Heart left ventricle (tissue), 16 donors: ENCODE measurements at regions of chr7 and their contacts with region 1.

Region 1: GRCh38 chr7:94907026-94907810 is at the start of gene PPP1R9A:
- DNase-seq: peak; percentile 47 to 60 (median 50)
- ATAC-seq: peak; percentile 63 to 91 (median 90)
- H3K4me3 ChIP-seq: peak within 1 kb of the TSS; percentile 35 to 83 (median 60)
- H3K27ac ChIP-seq: peak within 1 kb of the TSS; percentile 40 to 84 (median 74)
- H3K4me1 ChIP-seq: peaks cover 0 to 13% (median 3%) of the 10 kb centered on the region in 12 donors
- H3K27me3 ChIP-seq: peaks cover 0 to 18% (median 0%) of the 10 kb centered on the region in 9 donors
- CTCF ChIP-seq: peak in 10 of 12 donors; percentile 7 to 56 (median 32)
- POLR2A ChIP-seq: no peak
- total RNA-seq, gene PPP1R9A: 24.0 to 42.8 (median 31.0) TPM

Region 2: GRCh38 chr7:94657771-94658693 is 249.2 kb before region 1 on chr7:
- intact Hi-C with region 1: loop called in 1 of 10 experiments (anchors 5 kb)
- DNase-seq: peak; percentile 86 to 94 (median 94)
- ATAC-seq: peak; percentile 94 to 97 (median 95)
- H3K4me3 ChIP-seq: peak overlapping the region; percentile 23 to 79 (median 72)
- H3K27ac ChIP-seq: peak overlapping the region in 7 of 12 donors; percentile 11 to 78 (median 44)
- H3K4me1 ChIP-seq: peaks cover 0 to 30% (median 5%) of the 10 kb centered on the region in 12 donors
- H3K27me3 ChIP-seq: peaks cover 0 to 31% (median 4%) of the 10 kb centered on the region in 9 donors
- CTCF ChIP-seq: no peak
- POLR2A ChIP-seq: peak in 1 of 2 donors; percentile 15

Region 3: DNA sequence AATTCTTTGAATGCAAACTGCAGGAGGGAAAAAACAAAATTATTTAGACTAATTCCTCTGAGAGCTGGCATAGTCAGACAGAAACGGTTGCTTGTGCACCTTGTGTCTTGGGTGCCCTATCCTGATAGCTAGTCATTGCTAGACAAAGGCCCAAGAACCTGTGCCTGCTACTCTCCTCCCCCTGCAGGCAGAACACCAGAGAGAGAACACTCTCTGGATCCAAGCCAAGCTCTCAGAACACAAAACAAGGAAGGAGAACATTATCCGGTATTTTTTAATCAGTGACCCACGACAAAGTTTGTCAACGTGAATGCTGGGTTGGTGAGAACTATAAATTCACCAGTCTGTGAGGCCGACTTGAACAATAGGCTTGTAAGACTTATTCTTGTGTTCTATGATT is 18.7 kb before region 1 on chr7:
- intact Hi-C with region 1: loop called in 1 of 10 experiments (anchors 1 kb)
- DNase-seq: peak in 1 of 5 donors; percentile 40
- ATAC-seq: peak; percentile 61 to 76 (median 66)
- H3K4me3 ChIP-seq: no peak overlapping the region
- H3K27ac ChIP-seq: peak overlapping the region in 4 of 12 donors; percentile 12 to 44 (median 36)
- H3K4me1 ChIP-seq: peaks cover 0 to 16% (median 6%) of the 10 kb centered on the region in 12 donors
- H3K27me3 ChIP-seq: no peaks in the 10 kb centered on the region
- CTCF ChIP-seq: peak in 10 of 12 donors; percentile 18 to 53 (median 32)
- POLR2A ChIP-seq: no peak

Region 4: GRCh38 chr7:95041031-95041430 is 133.8 kb after region 1 on chr7:
- intact Hi-C with region 1: loop called in 1 of 10 experiments (anchors 5 kb)
- DNase-seq: no peak
- ATAC-seq: no peak
- H3K4me3 ChIP-seq: no peak overlapping the region
- H3K27ac ChIP-seq: no peak overlapping the region
- H3K4me1 ChIP-seq: peaks cover 0 to 6% (median 0%) of the 10 kb centered on the region in 12 donors
- H3K27me3 ChIP-seq: no peaks in the 10 kb centered on the region
- CTCF ChIP-seq: no peak
- POLR2A ChIP-seq: no peak

Region 5: GRCh38 chr7:95199779-95200558 is 292.8 kb after region 1 on chr7:
- intact Hi-C with region 1: loop called in 4 of 10 experiments (anchors 5 to 10 kb)
- DNase-seq: peak in 2 of 5 donors; percentile 22 to 28
- ATAC-seq: peak; percentile 75 to 87 (median 82)
- H3K4me3 ChIP-seq: no peak overlapping the region
- H3K27ac ChIP-seq: no peak overlapping the region
- H3K4me1 ChIP-seq: peaks cover 0 to 7% (median 0%) of the 10 kb centered on the region in 12 donors
- H3K27me3 ChIP-seq: no peaks in the 10 kb centered on the region
- CTCF ChIP-seq: peak; percentile 42 to 74 (median 63)
- POLR2A ChIP-seq: no peak